ENCODE measurements at regions of chr14 and their contacts with region 1.

Region 1: GRCh38 chr14:99884834-99885648 is 91.8 kb downstream of the EML1 start:
- DNase-seq: peak; percentile 63
- H3K4me3 Mint-ChIP-seq: no peak overlapping the region
- H3K27ac Mint-ChIP-seq: no peak overlapping the region
- H3K4me1 Mint-ChIP-seq: no peaks in the 10 kb centered on the region
- H3K27me3 Mint-ChIP-seq: no peaks in the 10 kb centered on the region
- CTCF ChIP-seq: peak; percentile 66

Region 2: GRCh38 chr14:99518441-99519346 is 366.3 kb before region 1 on chr14:
- CTCF ChIA-PET with region 1: interaction called, 5 read pairs
- POLR2A ChIA-PET with region 1: no interaction called
- intact Hi-C with region 1: loop called (anchors 1 kb)
- DNase-seq: peak; percentile 75
- H3K4me3 Mint-ChIP-seq: no peak overlapping the region
- H3K27ac Mint-ChIP-seq: no peak overlapping the region
- H3K4me1 Mint-ChIP-seq: no peaks in the 10 kb centered on the region
- H3K27me3 Mint-ChIP-seq: no peaks in the 10 kb centered on the region
- CTCF ChIP-seq: peak; percentile 95

Region 3: DNA sequence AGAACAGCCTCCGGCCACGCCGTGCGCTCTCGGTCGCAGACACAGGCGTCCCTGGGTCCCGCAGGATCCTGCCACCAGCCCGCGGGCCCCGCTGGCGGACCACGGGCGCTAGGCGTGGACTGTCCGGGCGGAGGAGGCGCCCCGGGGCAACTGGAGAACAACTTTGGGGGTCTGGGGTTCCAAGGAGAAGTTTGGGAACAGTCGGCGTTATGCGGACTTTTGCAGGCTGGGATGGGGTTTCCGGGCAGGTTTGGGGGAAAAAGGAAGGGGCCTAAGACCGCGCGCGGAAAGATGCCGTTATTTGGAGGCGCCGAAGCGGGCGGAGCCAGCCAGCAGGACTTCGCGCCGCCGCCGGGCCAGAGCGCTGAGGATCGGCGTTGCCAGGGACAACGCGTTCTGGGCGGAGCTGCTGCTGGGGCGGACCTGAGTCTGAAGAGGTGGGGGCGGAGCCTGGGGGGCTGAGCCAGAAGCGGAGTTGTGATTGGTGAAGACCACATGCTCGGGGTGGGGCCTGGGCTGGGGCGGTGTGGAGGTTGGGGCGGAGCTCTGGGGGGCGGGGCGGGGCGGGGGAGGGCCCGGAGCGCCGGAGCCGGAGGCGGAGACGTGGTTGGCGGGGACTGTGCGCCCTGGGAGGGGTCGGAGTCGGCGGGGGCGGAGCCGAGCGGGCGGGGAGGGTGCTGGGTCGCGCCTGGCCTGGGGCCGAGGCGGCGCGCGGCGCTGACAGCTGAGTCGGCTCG is 201.3 kb before region 1 on chr14 and contains the start of gene CYP46A1:
- CTCF ChIA-PET with region 1: interaction called, 75 read pairs
- POLR2A ChIA-PET with region 1: interaction called, 6 read pairs
- intact Hi-C with region 1: loop called (anchors 1 kb)
- DNase-seq: peak; percentile 98
- H3K4me3 Mint-ChIP-seq: peak within 1 kb of the TSS; percentile 78
- H3K27ac Mint-ChIP-seq: no peak within 1 kb of the TSS
- H3K4me1 Mint-ChIP-seq: peaks cover 6% of the 10 kb centered on the region
- H3K27me3 Mint-ChIP-seq: peaks cover 28% of the 10 kb centered on the region
- CTCF ChIP-seq: no peak
- total RNA-seq, gene CYP46A1: 0.20 and 0.30 TPM in 2 replicates

Region 4: GRCh38 chr14:99729991-99730868 is 154.8 kb before region 1 on chr14:
- CTCF ChIA-PET with region 1: interaction called, 37 read pairs
- POLR2A ChIA-PET with region 1: no interaction called
- intact Hi-C with region 1: loop called (anchors 1 kb)
- DNase-seq: peak; percentile 34
- H3K4me3 Mint-ChIP-seq: no peak overlapping the region
- H3K27ac Mint-ChIP-seq: no peak overlapping the region
- H3K4me1 Mint-ChIP-seq: no peaks in the 10 kb centered on the region
- H3K27me3 Mint-ChIP-seq: no peaks in the 10 kb centered on the region
- CTCF ChIP-seq: peak; percentile 90

Region 5: GRCh38 chr14:99793213-99794150 is 91.6 kb before region 1 on chr14 and contains the start of gene EML1:
- CTCF ChIA-PET with region 1: interaction called, 3 read pairs
- POLR2A ChIA-PET with region 1: no interaction called
- intact Hi-C with region 1: loop called (anchors 5 kb)
- DNase-seq: peak; percentile 63
- H3K4me3 Mint-ChIP-seq: peak within 1 kb of the TSS; percentile 66
- H3K27ac Mint-ChIP-seq: no peak within 1 kb of the TSS
- H3K4me1 Mint-ChIP-seq: peaks cover 24% of the 10 kb centered on the region
- H3K27me3 Mint-ChIP-seq: no peaks in the 10 kb centered on the region
- CTCF ChIP-seq: no peak
- total RNA-seq, gene EML1: 9.5 and 11.6 TPM in 2 replicates

Region 6: GRCh38 chr14:99899578-99900178 is 14.6 kb after region 1 on chr14:
- CTCF ChIA-PET with region 1: interaction called, 15 read pairs
- POLR2A ChIA-PET with region 1: no interaction called
- intact Hi-C with region 1: no loop called
- DNase-seq: peak; percentile 31
- H3K4me3 Mint-ChIP-seq: no peak overlapping the region
- H3K27ac Mint-ChIP-seq: no peak overlapping the region
- H3K4me1 Mint-ChIP-seq: no peaks in the 10 kb centered on the region
- H3K27me3 Mint-ChIP-seq: no peaks in the 10 kb centered on the region
- CTCF ChIP-seq: no peak

Measured in MCF 10A (cell line).